ENCODE measurements at regions of chrX and their contacts with region 1.

Region 1: DNA sequence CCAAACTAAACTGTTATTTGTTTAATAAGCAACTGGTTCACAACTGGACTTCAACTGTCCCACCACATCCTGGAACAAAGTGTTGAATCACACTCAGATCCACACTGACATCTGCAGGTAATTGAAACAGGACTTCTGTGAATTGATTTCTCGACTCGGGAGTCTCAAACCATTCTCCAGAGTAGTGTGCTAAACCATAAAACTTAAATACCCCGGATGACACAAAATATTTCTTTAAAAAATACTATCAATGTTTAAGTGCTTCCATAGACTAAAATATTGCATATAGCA is 95.4 kb upstream of the PLAC1 start:
- DNase-seq: no peak
- ATAC-seq: peak in 1 of 2 donors; percentile 38

Region 2: GRCh38 chrX:134484039-134484438 is 269.6 kb before region 1 on chrX:
- intact Hi-C with region 1: loop called in 1 of 2 experiments (anchors 10 kb)
- DNase-seq: no peak
- ATAC-seq: no peak

Region 3: DNA sequence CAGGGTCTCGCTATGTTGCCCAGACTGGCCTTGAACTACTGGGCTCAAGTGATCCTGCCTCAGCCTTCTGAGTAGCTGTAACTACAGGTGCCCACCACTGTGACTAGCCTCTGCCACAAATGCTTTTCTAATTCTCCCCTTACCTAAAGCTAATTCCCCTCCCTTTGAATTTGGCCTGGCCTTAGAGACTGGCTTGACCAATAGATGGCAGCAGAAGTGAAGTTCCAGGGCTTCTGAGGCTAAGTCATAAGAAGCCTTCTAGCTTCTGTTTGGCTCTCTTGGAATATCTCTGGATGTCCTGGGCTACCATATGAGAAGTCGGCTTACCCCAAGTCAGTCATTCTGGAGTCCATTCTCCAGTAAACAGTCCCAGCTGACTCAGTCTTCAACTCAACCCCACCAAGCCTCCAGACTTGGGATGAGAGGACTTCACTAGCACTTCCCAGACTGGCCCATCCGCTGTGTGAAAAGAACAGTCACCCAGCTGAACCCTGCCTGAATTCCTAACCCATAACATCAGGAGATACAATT is 232.7 kb before region 1 on chrX:
- intact Hi-C with region 1: loop called (anchors 5 to 10 kb)
- DNase-seq: no peak
- ATAC-seq: peak; percentile 55 to 68